ENCODE measurements at regions of chr10 and their contacts with region 1.

Region 1: GRCh38 chr10:119103903-119104652 is at the start of gene DENND10:
- DNase-seq: peak; percentile 18 to 80 (median 51)
- ATAC-seq: peak; percentile 93
- H3K4me3 ChIP-seq: peak within 1 kb of the TSS; percentile 45
- H3K4me3 Mint-ChIP-seq: peak within 1 kb of the TSS; percentile 65 to 94 (median 85)
- H3K27ac ChIP-seq: peak within 1 kb of the TSS; percentile 69
- H3K27ac Mint-ChIP-seq: peak within 1 kb of the TSS; percentile 62 to 96 (median 84)
- H3K4me1 ChIP-seq: peaks cover 6 to 20% of the 10 kb centered on the region in 2 donors
- H3K4me1 Mint-ChIP-seq: peaks cover 5 to 35% (median 14%) of the 10 kb centered on the region in 7 donors
- H3K27me3 ChIP-seq: no peaks in the 10 kb centered on the region
- H3K27me3 Mint-ChIP-seq: no peaks in the 10 kb centered on the region
- total RNA-seq, gene DENND10: 22.1 to 41.7 (median 28.8) TPM

Region 2: GRCh38 chr10:119090968-119091367 is 13.1 kb before region 1 on chr10:
- CTCF ChIA-PET with region 1: interaction called, 3 read pairs
- POLR2A ChIA-PET with region 1: interaction called, 6 read pairs
- intact Hi-C with region 1: loop called in 1 of 2 experiments (anchors 1 kb)
- DNase-seq: peak in 7 of 9 donors; percentile 39 to 71 (median 48)
- ATAC-seq: peak; percentile 95
- H3K4me3 ChIP-seq: peak overlapping the region; percentile 3
- H3K4me3 Mint-ChIP-seq: peak overlapping the region; percentile 47 to 77 (median 67)
- H3K27ac ChIP-seq: peak overlapping the region; percentile 58
- H3K27ac Mint-ChIP-seq: peak overlapping the region; percentile 76 to 96 (median 93)
- H3K4me1 ChIP-seq: peaks cover 22 to 43% of the 10 kb centered on the region in 2 donors
- H3K4me1 Mint-ChIP-seq: peaks cover 23 to 53% (median 31%) of the 10 kb centered on the region in 7 donors
- H3K27me3 ChIP-seq: no peaks in the 10 kb centered on the region
- H3K27me3 Mint-ChIP-seq: no peaks in the 10 kb centered on the region

Region 3: DNA sequence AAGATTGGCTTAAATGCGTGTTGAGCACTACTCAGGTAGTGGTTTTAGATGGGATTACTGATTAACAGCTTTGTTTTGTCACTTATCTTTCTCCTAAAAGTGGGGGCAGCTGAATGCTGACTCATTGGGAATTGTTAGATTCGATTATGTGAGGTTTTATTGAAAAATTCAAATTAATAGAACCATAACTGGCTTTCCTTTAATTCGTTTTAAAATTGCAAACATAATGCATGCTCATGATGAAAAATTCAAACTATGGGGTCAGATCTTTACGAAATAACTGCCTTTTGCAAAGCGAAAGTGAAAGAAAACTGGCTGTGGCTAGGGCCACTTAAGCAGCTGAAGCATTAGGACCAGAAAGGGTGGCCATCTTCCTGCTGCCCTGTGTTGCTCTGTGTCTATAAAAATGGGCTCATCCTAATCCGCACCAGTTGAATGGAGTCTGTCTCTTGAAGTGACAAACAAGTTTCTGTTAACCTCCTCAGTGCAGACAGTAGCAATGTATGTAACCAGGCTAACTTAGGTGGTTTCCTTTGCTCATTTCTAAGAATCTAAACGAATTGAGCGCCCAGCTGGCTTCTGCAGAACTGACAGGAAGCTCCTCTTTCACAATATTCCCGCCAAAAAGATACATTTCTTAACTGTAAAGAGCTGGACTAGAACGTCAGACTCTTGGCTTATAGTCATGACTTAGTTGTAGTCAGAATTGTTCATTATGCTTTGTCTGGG is 27.6 kb after region 1 on chr10:
- CTCF ChIA-PET with region 1: no interaction called
- POLR2A ChIA-PET with region 1: interaction called, 3 read pairs
- intact Hi-C with region 1: loop called in 1 of 2 experiments (anchors 1 kb)
- DNase-seq: peak in 8 of 9 donors; percentile 24 to 61 (median 40)
- ATAC-seq: peak; percentile 77
- H3K4me3 ChIP-seq: peak overlapping the region; percentile 73
- H3K4me3 Mint-ChIP-seq: peak overlapping the region; percentile 81 to 96 (median 91)
- H3K27ac ChIP-seq: peak overlapping the region; percentile 66
- H3K27ac Mint-ChIP-seq: peak overlapping the region; percentile 92 to 97 (median 95)
- H3K4me1 ChIP-seq: peaks cover 8 to 16% of the 10 kb centered on the region in 2 donors
- H3K4me1 Mint-ChIP-seq: peaks cover 16 to 59% (median 32%) of the 10 kb centered on the region in 7 donors
- H3K27me3 ChIP-seq: no peaks in the 10 kb centered on the region
- H3K27me3 Mint-ChIP-seq: no peaks in the 10 kb centered on the region

Region 4: DNA sequence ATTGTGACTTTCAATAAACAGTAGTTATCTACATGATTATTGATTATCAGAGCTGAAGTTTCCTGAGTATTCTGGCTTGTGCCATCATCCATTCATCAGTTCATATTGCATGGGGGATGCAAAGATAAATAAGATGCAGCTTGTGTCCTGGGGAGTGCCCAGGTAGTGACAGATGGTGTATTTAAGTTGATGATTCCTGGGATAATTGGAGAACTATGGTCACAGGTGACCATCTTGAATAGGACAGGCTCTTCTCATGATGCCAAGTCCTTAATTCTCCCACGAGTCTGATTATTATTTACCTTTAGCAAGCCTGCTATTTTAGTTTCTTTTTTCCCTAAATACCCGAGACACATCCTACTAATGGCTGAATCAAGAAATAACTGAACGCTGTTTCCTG is 1417.8 kb after region 1 on chr10:
- CTCF ChIA-PET with region 1: no interaction called
- POLR2A ChIA-PET with region 1: no interaction called
- intact Hi-C with region 1: no loop called
- DNase-seq: no peak
- ATAC-seq: no peak
- H3K4me3 ChIP-seq: no peak overlapping the region
- H3K4me3 Mint-ChIP-seq: no peak overlapping the region
- H3K27ac ChIP-seq: no peak overlapping the region
- H3K27ac Mint-ChIP-seq: no peak overlapping the region
- H3K4me1 ChIP-seq: no peaks in the 10 kb centered on the region
- H3K4me1 Mint-ChIP-seq: no peaks in the 10 kb centered on the region
- H3K27me3 ChIP-seq: no peaks in the 10 kb centered on the region
- H3K27me3 Mint-ChIP-seq: peaks cover 0 to 7% (median 0%) of the 10 kb centered on the region in 5 donors